T-cell (primary cell): ENCODE measurements at regions of chr4 and their contacts with region 1.

Region 1: DNA sequence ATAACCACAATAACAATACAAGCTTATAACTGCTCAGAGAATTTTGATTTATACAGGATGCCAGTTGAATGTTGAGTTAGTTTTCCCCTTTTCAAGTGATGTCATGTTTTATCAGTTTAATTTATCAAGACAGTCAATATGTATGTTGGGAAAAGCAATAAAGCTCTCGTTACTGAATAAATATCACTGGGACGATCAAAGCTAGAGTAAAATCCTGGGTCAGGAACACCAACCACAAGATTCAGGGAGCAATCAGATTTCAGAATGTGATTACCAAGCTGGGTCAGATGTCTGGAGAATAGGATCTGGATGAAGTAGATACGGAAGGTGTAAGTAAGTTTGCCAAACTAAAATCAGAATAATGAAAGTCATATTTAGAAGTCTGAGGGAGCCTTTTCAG is 179.6 kb downstream of the GRID2 start:
- DNase-seq: no peak
- ATAC-seq: no peak
- H3K4me3 ChIP-seq: no peak overlapping the region
- H3K4me3 Mint-ChIP-seq: no peak overlapping the region
- H3K27ac ChIP-seq: no peak overlapping the region
- H3K27ac Mint-ChIP-seq: no peak overlapping the region
- H3K4me1 ChIP-seq: no peaks in the 10 kb centered on the region
- H3K4me1 Mint-ChIP-seq: no peaks in the 10 kb centered on the region
- H3K27me3 ChIP-seq: no peaks in the 10 kb centered on the region
- H3K27me3 Mint-ChIP-seq: no peaks in the 10 kb centered on the region

Region 2: GRCh38 chr4:92064574-92064973 is 418.8 kb before region 1 on chr4:
- CTCF ChIA-PET with region 1: no interaction called
- POLR2A ChIA-PET with region 1: interaction called in 1 of 2 experiments, 10 read pairs
- DNase-seq: no peak
- ATAC-seq: no peak
- H3K4me3 ChIP-seq: no peak overlapping the region
- H3K4me3 Mint-ChIP-seq: no peak overlapping the region
- H3K27ac ChIP-seq: no peak overlapping the region
- H3K27ac Mint-ChIP-seq: no peak overlapping the region
- H3K4me1 ChIP-seq: no peaks in the 10 kb centered on the region
- H3K4me1 Mint-ChIP-seq: no peaks in the 10 kb centered on the region
- H3K27me3 ChIP-seq: no peaks in the 10 kb centered on the region
- H3K27me3 Mint-ChIP-seq: no peaks in the 10 kb centered on the region